RWPE1 (cell line): ENCODE measurements at regions of chr5 and their contacts with region 1.

Region 1: GRCh38 chr5:158695595-158696330 is 404.0 kb downstream of the EBF1 start:
- DNase-seq: peak; percentile 70
- H3K27ac ChIP-seq: no peak overlapping the region
- CTCF ChIP-seq: peak; percentile 98

Region 2: GRCh38 chr5:158174918-158175851 is 520.6 kb before region 1 on chr5:
- CTCF ChIA-PET with region 1: interaction called, 15 read pairs
- POLR2A ChIA-PET with region 1: no interaction called
- DNase-seq: peak; percentile 79
- H3K27ac ChIP-seq: no peak overlapping the region
- CTCF ChIP-seq: peak; percentile 73

Region 3: DNA sequence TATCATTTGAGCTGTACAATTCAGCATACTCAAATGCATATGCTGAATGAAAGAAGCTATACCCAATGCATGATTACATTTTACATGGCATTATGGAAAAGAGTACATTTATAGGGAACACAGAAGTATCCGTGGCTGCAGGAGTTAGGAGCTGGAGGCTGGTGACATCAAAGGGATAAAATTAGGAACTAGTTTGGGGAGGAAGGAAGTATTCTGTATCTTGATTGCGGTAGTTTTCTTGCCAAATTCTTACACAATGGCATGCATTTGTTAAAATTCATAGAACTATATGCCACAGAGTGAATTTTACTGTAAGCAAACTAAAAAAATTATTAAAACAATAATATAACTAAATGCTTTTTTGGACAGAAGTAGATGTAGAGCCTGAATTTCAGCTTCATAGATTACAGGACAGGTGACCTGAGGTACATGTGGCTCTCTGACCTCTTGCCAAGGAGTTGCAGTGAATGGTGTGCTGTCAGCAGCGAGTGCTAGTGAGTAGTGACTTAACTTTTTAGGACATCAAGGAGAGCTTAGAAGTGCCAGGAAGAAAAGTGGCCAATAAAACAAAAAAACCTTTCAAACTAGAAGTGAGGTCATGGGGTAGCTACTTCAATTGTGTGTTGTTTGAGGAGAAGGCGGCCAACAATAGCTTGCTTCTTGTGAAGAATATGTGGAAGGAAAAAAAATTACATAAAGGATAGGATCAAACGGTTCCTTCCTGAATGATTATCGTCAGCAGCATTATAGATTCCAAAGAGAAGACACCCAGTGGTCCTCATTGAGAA is 322.0 kb before region 1 on chr5:
- CTCF ChIA-PET with region 1: no interaction called
- POLR2A ChIA-PET with region 1: no interaction called
- DNase-seq: no peak
- H3K27ac ChIP-seq: no peak overlapping the region
- CTCF ChIP-seq: no peak

Region 4: GRCh38 chr5:158634714-158635113 is 61.0 kb before region 1 on chr5:
- CTCF ChIA-PET with region 1: no interaction called
- POLR2A ChIA-PET with region 1: no interaction called
- DNase-seq: no peak
- H3K27ac ChIP-seq: no peak overlapping the region
- CTCF ChIP-seq: no peak

Region 5: DNA sequence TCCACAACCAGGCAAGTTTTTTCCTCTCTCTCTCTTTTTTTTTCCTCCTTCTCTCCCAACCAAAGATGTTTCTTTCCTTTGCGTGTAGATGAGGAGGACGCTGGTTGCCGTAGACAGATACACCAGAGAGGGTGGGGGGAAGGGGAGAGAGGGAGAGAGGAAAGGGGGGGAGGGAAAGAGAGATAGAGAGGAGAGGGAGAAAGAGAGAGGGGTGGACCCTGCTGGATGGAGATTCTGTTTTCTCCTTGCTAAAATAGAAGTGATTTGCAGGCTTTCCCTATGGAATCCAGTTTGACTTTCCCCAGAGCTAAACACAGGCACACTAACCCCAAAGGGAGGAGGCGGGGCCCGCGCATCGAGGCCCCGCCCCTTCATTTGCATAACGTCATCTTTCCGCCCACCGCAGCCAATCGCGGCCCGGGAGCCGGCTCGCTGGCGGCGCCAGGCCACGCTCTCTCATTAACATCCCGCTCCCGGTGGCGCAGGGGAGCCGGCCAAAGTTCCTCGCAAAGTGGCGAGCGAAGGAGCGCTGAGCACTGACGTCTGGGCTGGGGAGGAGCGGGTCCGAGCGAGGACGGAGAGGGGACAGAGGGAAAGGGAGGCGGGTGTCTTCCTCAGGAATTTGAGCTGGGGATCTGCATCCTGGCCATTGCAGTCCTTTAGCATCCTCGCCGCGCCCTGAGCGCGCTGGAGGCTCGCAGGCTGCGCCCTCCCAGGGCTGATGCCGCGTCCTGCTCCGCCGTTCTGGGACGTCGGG is 404.4 kb after region 1 on chr5:
- CTCF ChIA-PET with region 1: interaction called, 142 read pairs
- POLR2A ChIA-PET with region 1: no interaction called
- DNase-seq: peak; percentile 94
- H3K27ac ChIP-seq: no peak overlapping the region
- CTCF ChIP-seq: no peak

Region 6: DNA sequence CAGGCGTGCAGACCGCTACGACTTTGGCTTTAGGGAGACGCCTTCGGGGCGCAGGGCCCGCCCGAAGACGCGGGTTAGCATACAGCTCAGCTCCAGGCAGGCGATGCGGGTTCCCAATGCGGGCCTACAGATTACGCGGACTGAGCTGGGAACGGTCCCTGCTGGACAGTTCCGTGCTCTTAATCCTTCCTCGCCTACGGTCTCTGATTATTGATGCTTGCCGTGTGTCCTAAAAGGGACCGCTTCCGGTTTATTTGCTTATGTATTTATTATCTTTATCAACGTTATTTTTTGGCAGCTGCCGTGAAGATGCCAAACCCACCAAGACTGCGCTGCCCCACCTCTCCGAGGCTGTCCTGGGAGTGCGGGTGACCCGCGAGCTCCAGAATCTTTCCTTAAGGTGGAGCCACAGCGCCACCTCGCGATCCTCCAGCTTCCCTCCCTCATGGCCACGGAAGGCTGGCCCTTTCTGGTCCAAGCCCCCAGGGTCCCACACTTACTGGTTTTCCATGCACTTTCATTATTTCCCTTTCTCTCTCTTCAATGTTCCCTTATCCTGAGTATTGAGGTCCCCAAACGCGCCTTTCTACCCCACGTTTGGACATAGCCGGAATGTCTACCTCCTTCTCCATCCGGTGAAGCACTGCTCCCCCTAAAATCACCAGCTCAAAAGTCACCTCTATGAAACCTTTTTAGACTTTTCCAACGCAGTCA is 411.0 kb after region 1 on chr5:
- CTCF ChIA-PET with region 1: interaction called, 142 read pairs
- POLR2A ChIA-PET with region 1: no interaction called
- DNase-seq: peak; percentile 80
- H3K27ac ChIP-seq: no peak overlapping the region
- CTCF ChIP-seq: peak; percentile 94

Region 7: GRCh38 chr5:159133041-159133741 is 437.4 kb after region 1 on chr5:
- CTCF ChIA-PET with region 1: interaction called, 14 read pairs
- POLR2A ChIA-PET with region 1: no interaction called
- DNase-seq: peak; percentile 65
- H3K27ac ChIP-seq: no peak overlapping the region
- CTCF ChIP-seq: peak; percentile 88